ENCODE measurements at regions of chr11 and their contacts with region 1.

Region 1: GRCh38 chr11:35822815-35823495 is 120.9 kb upstream of the LDLRAD3 start:
- DNase-seq: no peak
- H3K4me3 ChIP-seq: no peak overlapping the region
- H3K27ac ChIP-seq: no peak overlapping the region
- H3K4me1 ChIP-seq: 0 out of 2 replicates have a peak, but pooled peaks cover 8% of the 10 kb centered on the region
- H3K27me3 ChIP-seq: no peaks in the 10 kb centered on the region
- CTCF ChIP-seq: no peak

Region 2: GRCh38 chr11:35485656-35486322 is 337.2 kb before region 1 on chr11:
- CTCF ChIA-PET with region 1: interaction called, 23 read pairs
- POLR2A ChIA-PET with region 1: no interaction called
- intact Hi-C with region 1: loop called (anchors 5 kb)
- DNase-seq: peak; percentile 68 to 83
- H3K4me3 ChIP-seq: no peak overlapping the region
- H3K27ac ChIP-seq: no peak overlapping the region
- H3K4me1 ChIP-seq: no peaks in the 10 kb centered on the region
- H3K27me3 ChIP-seq: no peaks in the 10 kb centered on the region
- CTCF ChIP-seq: peak; percentile 96

Region 3: DNA sequence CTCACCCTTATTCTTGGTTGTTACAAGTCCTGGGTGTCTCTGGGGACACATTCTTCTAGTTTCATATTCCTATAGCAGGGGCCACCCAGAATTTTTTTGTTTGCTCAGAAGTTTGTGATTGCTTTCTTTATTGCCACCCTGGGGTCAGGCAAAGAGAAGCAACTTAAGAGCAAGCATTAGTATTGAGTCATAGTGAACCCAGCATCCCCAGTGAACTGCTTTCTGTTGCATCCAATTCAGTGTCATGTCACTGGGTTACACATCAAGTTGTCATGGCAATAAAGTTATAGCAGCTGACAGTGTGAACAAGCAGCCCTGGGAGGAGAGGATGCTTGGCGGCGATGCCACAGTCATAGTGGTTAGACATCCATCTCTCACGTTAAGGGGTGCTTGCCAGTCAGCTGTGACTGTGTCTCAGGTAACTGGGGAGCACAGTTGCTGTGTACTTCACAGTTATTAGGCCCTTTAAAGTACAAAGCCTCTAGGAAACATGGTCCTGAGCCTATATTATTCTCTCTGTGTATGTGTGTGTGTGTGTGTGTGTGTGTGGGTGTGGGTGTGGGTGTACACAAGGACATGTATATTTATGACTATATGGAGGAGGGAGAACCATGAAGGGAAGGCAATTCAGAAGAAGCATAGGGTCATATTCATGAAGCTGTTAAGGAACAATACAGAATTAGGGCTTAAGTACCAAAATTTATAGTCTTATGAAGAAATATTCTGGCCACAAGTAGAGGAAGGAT is 107.9 kb before region 1 on chr11:
- CTCF ChIA-PET with region 1: no interaction called
- POLR2A ChIA-PET with region 1: no interaction called
- intact Hi-C with region 1: no loop called
- DNase-seq: no peak
- H3K4me3 ChIP-seq: no peak overlapping the region
- H3K27ac ChIP-seq: no peak overlapping the region
- H3K4me1 ChIP-seq: no peaks in the 10 kb centered on the region
- H3K27me3 ChIP-seq: no peaks in the 10 kb centered on the region
- CTCF ChIP-seq: no peak

Region 4: GRCh38 chr11:35794850-35795249 is 28.1 kb before region 1 on chr11:
- CTCF ChIA-PET with region 1: interaction called, 12 read pairs
- POLR2A ChIA-PET with region 1: no interaction called
- intact Hi-C with region 1: no loop called
- DNase-seq: peak; percentile 46 to 83
- H3K4me3 ChIP-seq: no peak overlapping the region
- H3K27ac ChIP-seq: peak overlapping the region; percentile 30
- H3K4me1 ChIP-seq: peaks cover 56% of the 10 kb centered on the region
- H3K27me3 ChIP-seq: no peaks in the 10 kb centered on the region
- CTCF ChIP-seq: no peak

Region 5: GRCh38 chr11:35943713-35944655 is 121.0 kb after region 1 on chr11 and contains the start of gene LDLRAD3:
- CTCF ChIA-PET with region 1: no interaction called
- POLR2A ChIA-PET with region 1: no interaction called
- intact Hi-C with region 1: loop called (anchors 2 kb)
- DNase-seq: peak; percentile 64 to 74
- H3K4me3 ChIP-seq: peak within 1 kb of the TSS; percentile 69
- H3K27ac ChIP-seq: no peak within 1 kb of the TSS
- H3K4me1 ChIP-seq: peaks cover 28% of the 10 kb centered on the region
- H3K27me3 ChIP-seq: no peaks in the 10 kb centered on the region
- CTCF ChIP-seq: no peak
- total RNA-seq, gene LDLRAD3: 15.9 and 19.5 TPM in 2 replicates

Region 6: GRCh38 chr11:36056160-36056751 is 233.3 kb after region 1 on chr11:
- CTCF ChIA-PET with region 1: interaction called, 17 read pairs
- POLR2A ChIA-PET with region 1: no interaction called
- intact Hi-C with region 1: loop called (anchors 1 kb)
- DNase-seq: peak; percentile 42 to 46
- H3K4me3 ChIP-seq: no peak overlapping the region
- H3K27ac ChIP-seq: no peak overlapping the region
- H3K4me1 ChIP-seq: no peaks in the 10 kb centered on the region
- H3K27me3 ChIP-seq: no peaks in the 10 kb centered on the region
- CTCF ChIP-seq: peak; percentile 79

Region 7: DNA sequence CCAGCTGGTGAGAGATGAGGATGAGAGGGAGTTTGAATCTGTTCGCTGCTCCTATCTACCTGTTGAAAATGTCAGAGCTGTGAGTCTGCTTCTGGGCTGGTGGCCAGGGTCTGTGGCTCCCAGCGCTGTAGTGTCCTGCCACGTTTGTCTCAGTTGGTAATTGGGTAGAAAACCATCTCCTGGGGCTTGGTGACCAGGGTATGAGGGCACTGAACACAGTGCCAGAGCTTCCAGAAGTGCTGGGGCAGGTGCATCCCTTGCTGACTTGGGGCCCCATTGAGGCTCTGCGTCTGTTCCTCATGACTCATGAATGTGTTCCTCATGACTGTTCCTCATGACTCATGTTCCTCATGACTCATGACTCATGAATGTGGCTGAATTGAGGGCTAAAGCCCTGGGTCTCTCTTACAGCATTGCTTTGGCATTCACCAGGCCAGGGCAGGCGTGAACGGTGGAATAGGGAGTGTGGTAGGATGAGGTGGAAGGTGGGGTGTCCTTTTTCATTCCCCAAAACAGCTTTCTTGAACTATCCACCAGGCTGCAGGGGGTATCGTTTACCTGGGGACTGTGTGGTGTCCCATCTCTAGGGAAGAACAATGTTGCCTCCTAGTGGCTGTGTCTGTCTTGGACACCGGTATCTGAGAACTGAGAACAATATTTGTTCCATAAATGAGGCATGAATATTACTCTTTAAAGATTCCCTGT is 326.7 kb after region 1 on chr11:
- CTCF ChIA-PET with region 1: interaction called, 16 read pairs
- POLR2A ChIA-PET with region 1: no interaction called
- intact Hi-C with region 1: loop called (anchors 1 kb)
- DNase-seq: peak; percentile 94 to 100
- H3K4me3 ChIP-seq: no peak overlapping the region; the same call in 1 of the 2 replicates
- H3K27ac ChIP-seq: peak overlapping the region; percentile 89
- H3K4me1 ChIP-seq: peaks cover 30% of the 10 kb centered on the region
- H3K27me3 ChIP-seq: no peaks in the 10 kb centered on the region
- CTCF ChIP-seq: peak; percentile 88

Region 8: DNA sequence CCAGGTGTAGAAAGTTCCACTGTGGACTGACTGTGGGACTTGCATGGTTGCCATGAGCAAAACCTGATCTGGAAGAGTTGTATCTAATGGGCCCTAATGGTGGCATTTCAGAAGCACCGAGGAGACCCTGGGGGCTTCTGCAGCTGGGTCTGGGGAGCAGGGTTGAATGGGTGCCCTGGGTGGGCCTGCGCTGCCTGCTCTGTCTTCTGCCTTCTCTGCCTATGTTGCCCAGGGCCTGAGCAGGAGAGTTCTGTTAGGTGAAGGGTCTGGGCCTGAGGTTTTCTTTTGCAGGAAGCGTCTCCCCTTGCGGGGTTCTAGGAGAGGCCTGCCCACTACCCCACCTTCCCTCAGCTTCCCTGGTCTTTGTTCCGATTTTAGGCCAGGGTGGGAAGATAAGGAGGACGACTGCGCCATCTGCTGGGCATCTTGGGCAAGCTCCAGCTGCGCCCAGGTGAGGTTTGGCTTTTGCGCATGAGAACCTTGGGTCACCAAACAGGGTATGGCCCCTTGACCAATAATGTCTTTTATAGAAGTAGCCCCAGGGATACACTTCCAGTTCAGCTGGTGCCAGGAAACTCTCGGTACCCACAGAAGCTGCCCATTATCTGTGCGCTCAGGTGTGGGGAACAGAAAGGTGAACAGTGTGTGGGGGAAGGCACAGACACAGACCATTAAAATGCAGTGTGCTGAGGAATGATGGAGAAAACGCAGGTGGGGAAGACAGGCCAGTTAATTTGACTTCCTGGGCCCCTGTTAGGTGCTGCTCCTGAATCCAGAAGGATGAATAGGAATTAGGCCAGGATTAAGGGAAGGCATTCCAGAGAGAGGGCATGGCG is 443.1 kb after region 1 on chr11:
- CTCF ChIA-PET with region 1: interaction called, 21 read pairs
- POLR2A ChIA-PET with region 1: interaction called, 4 read pairs
- intact Hi-C with region 1: loop called (anchors 2 kb)
- DNase-seq: peak; percentile 46 to 63
- H3K4me3 ChIP-seq: no peak overlapping the region
- H3K27ac ChIP-seq: no peak overlapping the region
- H3K4me1 ChIP-seq: no peaks in the 10 kb centered on the region
- H3K27me3 ChIP-seq: no peaks in the 10 kb centered on the region
- CTCF ChIP-seq: peak; percentile 97